Activated CD4-positive, alpha-beta T cell treated with anti-CD3 and anti-CD28 coated beads, Interleukin-2, amount 10 ng/mL, durations not matched to agents 7 days and 5 days (primary cell): ENCODE measurements at regions of chr16 and their contacts with region 1.

Region 1: DNA sequence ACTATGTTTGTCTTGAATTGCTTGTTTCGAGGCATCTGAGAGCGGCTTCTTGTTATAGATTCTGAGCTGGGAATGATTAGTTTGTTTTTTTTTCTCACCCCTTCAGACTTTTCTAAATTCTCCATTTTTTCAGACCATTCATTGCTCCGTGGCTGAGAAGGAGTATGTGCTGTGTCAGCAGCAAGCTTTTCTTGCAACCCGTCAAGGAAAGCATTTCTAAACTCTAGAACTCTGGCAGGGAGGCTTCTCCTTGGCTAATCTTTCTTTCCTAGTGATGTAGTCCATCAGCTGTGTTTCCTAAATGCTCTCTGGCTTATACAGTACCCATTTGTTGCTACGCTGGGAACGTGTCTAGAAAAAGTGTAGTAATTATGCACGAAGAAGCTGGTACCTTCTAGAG is 133.5 kb downstream of the FTO start:
- DNase-seq: no peak
- H3K4me3 Mint-ChIP-seq: no peak overlapping the region
- H3K27ac Mint-ChIP-seq: no peak overlapping the region
- H3K4me1 Mint-ChIP-seq: peaks cover 4% of the 10 kb centered on the region
- H3K27me3 Mint-ChIP-seq: no peaks in the 10 kb centered on the region

Region 2: DNA sequence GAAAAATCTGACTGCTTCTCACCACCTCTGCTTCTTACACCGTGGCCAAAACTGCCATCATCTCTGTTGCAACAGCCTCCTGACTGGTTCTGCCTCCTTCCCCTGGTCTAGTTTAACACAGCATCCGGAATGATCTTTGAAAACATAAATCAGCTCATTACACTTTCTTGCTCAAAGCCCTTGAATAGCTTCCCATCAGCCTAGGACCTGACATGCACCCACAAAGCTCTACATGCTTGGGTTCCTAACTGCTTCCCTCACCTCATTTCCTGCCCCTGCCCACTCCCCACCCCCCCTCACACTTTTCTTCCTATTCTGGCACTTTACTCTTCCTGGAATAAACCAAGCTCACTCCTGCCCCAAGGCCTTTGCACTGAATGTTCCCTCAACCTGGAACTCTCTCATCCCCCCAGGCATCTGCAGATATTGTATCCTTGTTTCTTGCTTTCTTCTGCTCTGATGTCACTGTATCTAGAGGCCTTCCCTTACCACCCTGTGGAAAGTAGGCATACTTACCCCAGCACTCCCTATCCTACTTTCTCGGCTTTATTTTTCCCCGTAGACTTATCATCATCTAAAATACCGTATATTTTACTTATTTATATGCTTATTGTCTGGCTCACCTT is 21.1 kb before region 1 on chr16:
- CTCF ChIA-PET with region 1: no interaction called
- POLR2A ChIA-PET with region 1: no interaction called
- DNase-seq: no peak
- H3K4me3 Mint-ChIP-seq: no peak overlapping the region
- H3K27ac Mint-ChIP-seq: no peak overlapping the region
- H3K4me1 Mint-ChIP-seq: peaks cover 8% of the 10 kb centered on the region
- H3K27me3 Mint-ChIP-seq: no peaks in the 10 kb centered on the region

Region 3: GRCh38 chr16:53826658-53827057 is 10.8 kb before region 1 on chr16:
- CTCF ChIA-PET with region 1: interaction called, 12 read pairs
- POLR2A ChIA-PET with region 1: no interaction called
- DNase-seq: no peak
- H3K4me3 Mint-ChIP-seq: no peak overlapping the region
- H3K27ac Mint-ChIP-seq: no peak overlapping the region
- H3K4me1 Mint-ChIP-seq: peaks cover under 1% of the 10 kb centered on the region
- H3K27me3 Mint-ChIP-seq: no peaks in the 10 kb centered on the region

Region 4: GRCh38 chr16:53849994-53850393 is 12.6 kb after region 1 on chr16:
- CTCF ChIA-PET with region 1: no interaction called
- POLR2A ChIA-PET with region 1: no interaction called
- DNase-seq: no peak
- H3K4me3 Mint-ChIP-seq: no peak overlapping the region
- H3K27ac Mint-ChIP-seq: no peak overlapping the region
- H3K4me1 Mint-ChIP-seq: peaks cover 6% of the 10 kb centered on the region
- H3K27me3 Mint-ChIP-seq: no peaks in the 10 kb centered on the region

Region 5: DNA sequence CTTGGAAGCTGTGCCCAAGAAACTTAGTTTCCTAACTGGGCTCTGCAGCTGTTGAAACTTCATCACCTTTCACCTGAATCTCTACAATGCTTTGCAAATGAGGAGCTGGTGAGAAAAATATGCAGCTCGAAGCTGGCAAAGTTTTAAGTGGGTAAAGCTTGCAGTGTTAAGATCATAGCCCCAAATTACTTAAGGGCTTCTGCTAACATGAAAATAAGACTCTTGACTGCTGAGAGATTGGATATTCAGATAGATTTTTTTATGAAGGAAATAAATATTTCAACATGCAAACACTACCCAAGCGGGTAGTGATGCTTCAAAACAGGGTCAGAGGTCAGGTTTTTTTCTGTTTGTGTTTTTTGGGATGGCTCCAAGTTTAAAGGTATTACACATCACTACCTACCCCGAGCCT is 145.2 kb after region 1 on chr16:
- CTCF ChIA-PET with region 1: no interaction called
- POLR2A ChIA-PET with region 1: no interaction called
- DNase-seq: no peak
- H3K4me3 Mint-ChIP-seq: no peak overlapping the region
- H3K27ac Mint-ChIP-seq: no peak overlapping the region
- H3K4me1 Mint-ChIP-seq: no peaks in the 10 kb centered on the region
- H3K27me3 Mint-ChIP-seq: no peaks in the 10 kb centered on the region